Vagina (tissue), 2 donors: ENCODE measurements at regions of chr11 and their contacts with region 1.

Region 1: DNA sequence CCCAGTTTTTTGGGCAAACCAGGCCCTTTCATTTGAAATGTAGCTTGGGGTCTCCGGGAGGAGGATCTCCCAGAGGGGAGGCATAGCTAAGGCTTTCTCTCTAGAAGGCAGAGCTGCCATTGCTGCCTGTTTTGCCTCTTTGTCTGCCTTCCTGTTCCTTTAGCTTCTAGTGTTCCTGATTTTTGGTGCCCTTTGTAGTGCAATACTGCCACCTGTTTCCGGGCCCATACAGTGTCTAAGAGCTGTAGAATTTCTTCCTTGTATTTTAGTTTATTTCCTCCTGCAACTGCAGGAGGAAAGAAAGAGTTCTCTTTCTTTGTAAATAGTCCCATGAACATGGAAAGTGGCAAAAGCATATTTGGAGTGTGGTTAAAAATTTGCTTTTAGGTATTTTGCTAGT is 19.3 kb upstream of the GLYATL1 start:
- DNase-seq: no peak
- H3K4me3 ChIP-seq: no peak overlapping the region
- H3K27ac ChIP-seq: no peak overlapping the region
- H3K4me1 ChIP-seq: no peaks in the 10 kb centered on the region
- H3K27me3 ChIP-seq: no peaks in the 10 kb centered on the region
- CTCF ChIP-seq: no peak
- POLR2A ChIP-seq: no peak

Region 2: GRCh38 chr11:58133309-58134076 is 786.5 kb before region 1 on chr11:
- intact Hi-C with region 1: loop called (anchors 10 kb)
- DNase-seq: no peak
- H3K4me3 ChIP-seq: no peak overlapping the region
- H3K27ac ChIP-seq: no peak overlapping the region
- H3K4me1 ChIP-seq: no peaks in the 10 kb centered on the region
- H3K27me3 ChIP-seq: no peaks in the 10 kb centered on the region
- CTCF ChIP-seq: no peak
- POLR2A ChIP-seq: no peak

Region 3: DNA sequence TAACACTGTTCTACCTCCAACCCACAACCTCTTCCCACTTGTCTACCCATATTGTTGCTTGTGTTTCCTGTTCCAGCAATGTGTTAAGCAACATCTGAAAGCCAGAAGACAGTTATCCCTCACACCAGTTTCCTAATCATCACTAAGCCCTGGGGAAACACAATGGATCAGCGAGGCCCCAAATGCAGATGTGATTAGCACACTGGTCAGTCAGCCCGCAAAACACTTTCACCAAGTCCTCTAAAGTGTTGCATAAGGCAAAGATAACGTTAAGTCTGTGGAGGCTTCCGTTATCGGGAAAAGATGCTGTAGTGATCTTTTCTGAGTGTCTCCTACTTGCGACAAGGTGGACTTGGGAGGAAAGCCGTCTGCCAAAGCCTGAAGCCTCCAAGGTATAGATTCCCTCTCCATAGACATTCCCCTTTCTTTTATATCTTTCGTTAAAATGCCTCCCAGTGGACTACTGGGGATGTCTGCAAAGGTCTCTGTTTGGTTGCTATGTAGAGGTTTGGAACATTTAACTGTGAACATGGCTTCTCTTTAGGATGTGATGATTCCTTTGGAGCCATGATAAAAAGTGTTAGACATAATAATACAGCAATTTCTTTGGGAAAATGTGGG is 1136.5 kb after region 1 on chr11 and contains the start of gene MS4A3:
- intact Hi-C with region 1: no loop called
- DNase-seq: no peak
- H3K4me3 ChIP-seq: no peak within 1 kb of the TSS
- H3K27ac ChIP-seq: no peak within 1 kb of the TSS
- H3K4me1 ChIP-seq: no peaks in the 10 kb centered on the region
- H3K27me3 ChIP-seq: no peaks in the 10 kb centered on the region
- CTCF ChIP-seq: no peak
- POLR2A ChIP-seq: no peak
- total RNA-seq, gene MS4A3: not detected